GM10248 (cell line): ENCODE measurements at regions of chr10 and their contacts with region 1.

Region 1: GRCh38 chr10:60717852-60718251 is 60.4 kb upstream of the CDK1 start:
- DNase-seq: no peak
- CTCF ChIP-seq: no peak

Region 2: DNA sequence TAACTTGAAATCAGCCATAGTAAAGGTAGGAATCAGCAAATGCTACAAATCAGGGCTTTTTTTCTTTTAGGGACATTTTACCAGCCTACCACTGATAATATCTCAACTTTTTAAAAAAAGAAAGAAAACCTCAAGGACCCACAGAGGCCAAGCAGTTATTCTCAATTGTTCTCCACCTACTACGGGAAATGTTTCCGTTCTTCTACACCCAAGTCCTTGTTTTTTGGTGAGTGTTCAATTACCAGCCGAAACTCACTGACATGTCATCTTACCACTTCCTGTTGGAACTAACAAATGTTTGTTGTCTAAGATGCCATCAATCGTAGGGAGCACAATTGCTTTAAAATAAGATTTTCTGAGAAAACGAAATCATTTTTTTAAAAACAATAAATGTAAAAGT is 10.2 kb after region 1 on chr10:
- CTCF ChIA-PET with region 1: interaction called, 11 read pairs
- POLR2A ChIA-PET with region 1: no interaction called
- DNase-seq: no peak
- CTCF ChIP-seq: no peak